ENCODE measurements at regions of chr2 and their contacts with region 1.

Region 1: GRCh38 chr2:237723602-237724001 is 75.0 kb upstream of the RBM44 start:
- H3K4me3 Mint-ChIP-seq: no peak overlapping the region
- H3K27ac Mint-ChIP-seq: peak overlapping the region; percentile 64
- H3K4me1 Mint-ChIP-seq: peaks cover 58% of the 10 kb centered on the region
- H3K27me3 Mint-ChIP-seq: no peaks in the 10 kb centered on the region

Region 2: DNA sequence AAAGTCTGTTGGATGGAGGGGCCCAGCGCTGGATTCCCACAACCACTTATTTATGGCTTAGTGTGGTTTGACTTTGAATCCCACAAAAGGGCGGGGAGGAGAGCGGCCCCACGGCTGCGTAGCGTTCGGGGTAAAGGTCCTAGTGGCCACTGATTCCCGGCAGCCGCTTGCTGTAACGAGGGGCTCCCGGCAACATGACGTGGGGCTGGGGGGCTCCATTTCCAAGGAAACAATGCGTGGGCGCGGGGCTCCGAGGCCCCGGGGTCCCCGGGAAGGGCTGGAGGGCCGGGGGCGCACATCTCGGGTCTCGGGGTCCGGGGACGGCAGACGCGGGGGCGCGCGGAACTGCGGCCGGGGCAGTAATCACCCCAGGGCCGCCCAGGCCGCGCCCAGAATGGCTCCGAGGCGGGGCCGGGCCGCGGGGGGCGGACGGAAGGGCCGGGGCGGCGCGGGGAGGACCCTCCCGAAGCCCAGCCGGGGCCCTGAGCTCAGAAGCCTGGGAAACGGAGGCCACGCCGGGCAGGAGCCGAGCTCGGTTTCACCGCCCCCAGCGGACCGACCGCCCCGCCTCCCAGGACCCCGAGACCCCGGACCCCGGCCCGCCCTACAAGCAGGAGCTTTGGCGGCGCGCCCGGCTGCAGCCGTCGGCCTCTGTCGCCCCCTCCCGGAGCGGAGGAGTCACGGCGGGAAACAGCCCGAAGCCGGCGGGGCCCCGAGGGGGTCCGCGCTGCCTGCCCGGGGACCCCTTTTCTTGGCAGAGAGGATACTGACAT is 248.5 kb before region 1 on chr2:
- intact Hi-C with region 1: no loop called
- H3K4me3 Mint-ChIP-seq: peak overlapping the region; percentile 91
- H3K27ac Mint-ChIP-seq: peak overlapping the region; percentile 98
- H3K4me1 Mint-ChIP-seq: peaks cover 27% of the 10 kb centered on the region
- H3K27me3 Mint-ChIP-seq: peaks cover 39% of the 10 kb centered on the region

Region 3: GRCh38 chr2:237682856-237683670 is 40.5 kb before region 1 on chr2:
- intact Hi-C with region 1: no loop called
- H3K4me3 Mint-ChIP-seq: no peak overlapping the region
- H3K27ac Mint-ChIP-seq: peak overlapping the region; percentile 42
- H3K4me1 Mint-ChIP-seq: peaks cover 60% of the 10 kb centered on the region
- H3K27me3 Mint-ChIP-seq: no peaks in the 10 kb centered on the region

Region 4: GRCh38 chr2:237711458-237712150 is 12.0 kb before region 1 on chr2:
- intact Hi-C with region 1: loop called (anchors 2 kb)
- H3K4me3 Mint-ChIP-seq: no peak overlapping the region
- H3K27ac Mint-ChIP-seq: no peak overlapping the region
- H3K4me1 Mint-ChIP-seq: peaks cover 85% of the 10 kb centered on the region
- H3K27me3 Mint-ChIP-seq: no peaks in the 10 kb centered on the region

Measured in dendritic cell treated with granulocyte-macrophage colony-stimulating factor and Interleukin-4, amounts not matched to agents 40 ng/mL and 50 ng/mL, for 4 days (primary cell).